HEK293 (cell line): ENCODE measurements at regions of chr19 and their contacts with region 1.

Region 1: GRCh38 chr19:42529248-42529764 is 1.0 kb upstream of the CEACAM1 start:
- H3K4me3 ChIP-seq: no peak overlapping the region
- H3K27ac ChIP-seq: no peak overlapping the region
- H3K4me1 ChIP-seq: no peaks in the 10 kb centered on the region
- CTCF ChIP-seq: peak; percentile 91

Region 2: GRCh38 chr19:42455621-42456081 is 73.7 kb before region 1 on chr19:
- CTCF ChIA-PET with region 1: interaction called, 209 read pairs
- POLR2A ChIA-PET with region 1: no interaction called
- H3K4me3 ChIP-seq: no peak overlapping the region
- H3K27ac ChIP-seq: no peak overlapping the region
- H3K4me1 ChIP-seq: peaks cover 3% of the 10 kb centered on the region; the same call in 1 of the 2 replicates
- CTCF ChIP-seq: no peak

Region 3: DNA sequence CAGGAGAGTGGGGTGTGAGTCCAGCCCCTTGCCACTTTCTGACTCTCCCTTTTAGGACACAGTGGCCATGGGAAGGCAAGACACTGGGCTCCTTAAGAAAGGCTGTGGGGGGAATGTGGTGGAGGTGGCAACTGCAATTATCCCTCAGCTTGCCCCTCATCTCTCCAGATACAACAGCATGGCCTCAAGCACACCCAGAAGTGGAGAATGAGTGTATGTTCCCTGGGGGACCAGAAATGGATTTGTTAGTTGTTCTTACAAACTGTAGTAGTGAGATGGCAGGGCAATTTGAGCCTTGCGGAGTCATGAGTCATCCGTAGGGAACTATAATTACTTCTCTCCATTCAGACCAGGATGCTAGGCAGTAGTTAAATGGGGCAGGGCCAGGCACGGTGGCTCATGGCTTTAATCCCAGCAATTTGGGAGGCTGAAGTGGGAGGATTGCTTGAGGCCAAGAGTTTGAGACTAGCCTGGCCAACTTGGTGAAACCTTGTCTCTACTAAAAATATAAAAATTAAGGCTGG is 61.0 kb before region 1 on chr19:
- CTCF ChIA-PET with region 1: interaction called, 15 read pairs
- POLR2A ChIA-PET with region 1: interaction called, 4 read pairs
- H3K4me3 ChIP-seq: no peak overlapping the region
- H3K27ac ChIP-seq: peak overlapping the region; percentile 60; the same call in 1 of the 2 replicates
- H3K4me1 ChIP-seq: peaks cover 34% of the 10 kb centered on the region
- CTCF ChIP-seq: no peak

Region 4: DNA sequence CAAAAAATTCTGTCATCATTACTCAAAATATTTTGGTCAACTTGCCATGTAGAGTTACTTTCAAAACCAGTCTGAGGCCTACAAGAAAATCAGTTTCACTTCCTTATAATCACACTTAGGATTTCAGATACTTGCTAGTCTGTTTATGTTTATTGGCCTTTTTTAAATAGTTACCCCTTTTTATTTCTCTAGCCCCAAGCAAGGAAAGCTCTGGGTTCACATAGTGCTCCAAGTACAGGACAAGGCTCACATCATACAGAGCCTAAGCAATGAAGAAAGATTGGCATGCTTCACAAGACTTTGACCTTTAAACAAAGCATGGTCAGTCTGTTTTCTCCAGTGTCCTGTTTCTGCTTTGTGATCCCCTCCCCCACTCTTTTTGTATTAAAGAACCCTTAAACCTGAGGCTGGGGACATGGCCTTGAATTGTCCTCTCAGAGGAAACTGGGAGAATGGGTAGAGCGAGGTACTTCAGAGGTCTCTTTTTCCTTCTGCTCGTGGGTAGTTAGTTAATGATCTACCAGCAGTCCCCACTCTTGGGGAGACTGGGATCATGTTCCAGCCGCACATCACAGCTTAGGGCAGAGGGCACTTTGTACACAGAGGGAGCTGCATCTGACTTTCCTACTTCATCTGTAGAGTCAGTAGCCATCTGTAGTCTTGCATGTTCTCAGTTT is 31.7 kb before region 1 on chr19:
- CTCF ChIA-PET with region 1: interaction called, 11 read pairs
- POLR2A ChIA-PET with region 1: no interaction called
- H3K4me3 ChIP-seq: no peak overlapping the region
- H3K27ac ChIP-seq: no peak overlapping the region
- H3K4me1 ChIP-seq: peaks cover 6% of the 10 kb centered on the region; the same call in 1 of the 2 replicates
- CTCF ChIP-seq: no peak

Region 5: GRCh38 chr19:42519108-42519507 is 10.2 kb before region 1 on chr19:
- CTCF ChIA-PET with region 1: interaction called, 33 read pairs
- POLR2A ChIA-PET with region 1: no interaction called
- H3K4me3 ChIP-seq: no peak overlapping the region
- H3K27ac ChIP-seq: no peak overlapping the region
- H3K4me1 ChIP-seq: no peaks in the 10 kb centered on the region
- CTCF ChIP-seq: no peak

Region 6: DNA sequence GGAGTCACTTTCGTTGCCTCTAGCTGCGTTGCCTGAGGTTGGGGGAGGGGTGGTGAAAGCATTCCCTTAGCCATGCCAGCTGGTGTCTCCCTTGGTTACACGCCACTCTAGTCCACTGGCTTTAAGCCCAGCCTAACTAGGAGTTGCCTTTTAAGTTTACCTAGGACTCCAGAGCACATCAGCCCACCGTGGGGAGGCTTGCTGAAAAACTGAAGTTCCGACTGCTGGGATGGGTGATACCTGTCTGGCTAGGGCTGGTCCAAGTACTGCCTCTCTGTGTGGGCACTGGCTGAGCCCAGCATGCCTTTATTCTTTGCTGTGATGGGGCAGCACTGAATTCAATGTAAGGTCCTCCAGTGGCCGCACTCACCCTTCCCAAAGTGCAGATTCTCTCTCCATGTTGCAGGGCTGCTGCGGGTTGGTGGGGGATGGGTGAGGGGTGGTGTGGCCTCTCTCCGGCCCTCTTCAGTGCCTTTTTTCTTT is 10.8 kb after region 1 on chr19:
- CTCF ChIA-PET with region 1: interaction called, 26 read pairs
- POLR2A ChIA-PET with region 1: no interaction called
- H3K4me3 ChIP-seq: no peak overlapping the region
- H3K27ac ChIP-seq: no peak overlapping the region
- H3K4me1 ChIP-seq: no peaks in the 10 kb centered on the region
- CTCF ChIP-seq: no peak

Region 7: DNA sequence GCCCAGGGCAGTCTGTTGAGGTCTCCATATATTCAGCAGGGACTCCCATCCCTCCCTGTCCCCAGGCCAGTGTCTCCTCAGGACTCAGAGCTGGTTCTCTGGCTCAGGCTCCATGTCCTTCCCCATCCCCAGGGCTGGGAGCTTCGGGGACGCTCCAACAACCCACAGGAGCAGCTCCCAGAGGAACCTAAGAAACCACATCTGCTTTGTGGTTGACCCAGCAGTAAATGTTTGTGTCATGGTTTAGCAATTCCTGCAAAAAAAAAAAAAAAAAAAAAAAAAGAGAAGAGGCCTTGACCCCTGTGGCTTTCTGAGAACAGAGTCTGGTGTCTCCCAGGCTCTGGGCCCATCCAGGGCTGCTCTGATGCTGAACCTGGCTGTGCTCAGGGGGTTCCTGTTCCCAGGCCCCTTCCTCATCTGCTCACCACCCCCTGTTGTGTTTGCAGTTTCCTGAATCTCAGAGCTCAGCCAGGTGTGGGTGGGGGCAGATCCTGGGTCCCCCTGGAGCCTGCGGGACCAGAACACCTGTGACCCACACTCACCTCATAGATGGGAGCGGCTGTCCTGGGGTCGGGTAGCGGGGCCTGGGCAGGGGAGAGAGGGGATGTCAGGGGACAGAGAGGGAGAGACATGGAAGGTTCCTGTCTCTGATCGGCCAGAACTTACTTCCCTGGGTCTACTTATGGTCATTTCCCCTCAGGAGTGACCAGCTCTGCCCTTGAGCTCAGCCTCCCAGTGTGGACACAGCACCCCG is 24.2 kb after region 1 on chr19:
- CTCF ChIA-PET with region 1: no interaction called
- POLR2A ChIA-PET with region 1: no interaction called
- H3K4me3 ChIP-seq: no peak overlapping the region
- H3K27ac ChIP-seq: no peak overlapping the region
- H3K4me1 ChIP-seq: no peaks in the 10 kb centered on the region
- CTCF ChIP-seq: no peak